ENCODE measurements at regions of chr7 and their contacts with region 1.

Region 1: DNA sequence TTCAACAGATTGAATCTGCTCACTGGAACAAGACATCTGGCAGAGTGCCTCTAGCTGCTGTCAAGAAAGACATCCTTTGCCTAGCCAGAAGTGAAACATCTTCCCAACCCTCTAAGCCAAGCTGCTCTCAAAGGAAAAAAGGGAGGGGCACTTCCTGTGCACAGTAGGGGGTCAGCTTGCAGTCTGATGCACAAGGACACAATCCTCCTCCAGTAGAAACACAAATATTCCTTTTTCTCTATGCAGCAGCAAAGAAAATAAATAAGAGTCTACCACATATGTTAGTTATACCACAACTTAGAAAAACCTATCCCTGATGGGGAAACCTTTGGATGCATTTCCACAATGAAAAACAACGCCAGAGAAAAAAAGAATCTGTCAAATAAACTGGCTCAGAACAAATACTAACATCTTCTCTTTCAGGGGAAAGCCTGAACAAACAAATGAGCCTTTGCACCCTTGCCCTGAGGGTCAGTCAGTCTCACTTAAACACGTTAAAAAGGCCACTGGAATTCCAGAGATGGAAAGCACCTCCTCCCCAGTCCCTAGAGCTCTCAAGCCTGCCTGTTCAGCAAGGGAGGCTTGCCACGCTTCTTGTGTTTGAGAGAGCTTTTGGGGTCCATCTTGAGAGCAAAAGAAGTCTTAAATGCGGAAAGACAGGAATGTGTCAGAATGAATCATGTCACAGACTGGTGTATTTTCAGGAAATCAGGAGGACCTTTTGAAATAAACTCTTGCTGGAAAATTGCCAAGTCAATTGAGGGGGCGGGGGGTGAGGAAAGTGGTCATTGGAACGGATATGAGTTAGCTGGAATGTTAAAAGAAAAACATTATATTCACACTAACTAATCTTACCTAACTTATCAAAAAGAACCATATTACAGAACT is 7.5 kb downstream of the LAMB1 start:
- DNase-seq: peak; percentile 67 to 88
- H3K4me3 ChIP-seq: peak overlapping the region; percentile 12; the same call in 1 of the 2 replicates
- H3K27ac ChIP-seq: peak overlapping the region; percentile 75
- H3K4me1 ChIP-seq: peaks cover 69% of the 10 kb centered on the region
- H3K27me3 ChIP-seq: no peaks in the 10 kb centered on the region
- CTCF ChIP-seq: no peak

Region 2: DNA sequence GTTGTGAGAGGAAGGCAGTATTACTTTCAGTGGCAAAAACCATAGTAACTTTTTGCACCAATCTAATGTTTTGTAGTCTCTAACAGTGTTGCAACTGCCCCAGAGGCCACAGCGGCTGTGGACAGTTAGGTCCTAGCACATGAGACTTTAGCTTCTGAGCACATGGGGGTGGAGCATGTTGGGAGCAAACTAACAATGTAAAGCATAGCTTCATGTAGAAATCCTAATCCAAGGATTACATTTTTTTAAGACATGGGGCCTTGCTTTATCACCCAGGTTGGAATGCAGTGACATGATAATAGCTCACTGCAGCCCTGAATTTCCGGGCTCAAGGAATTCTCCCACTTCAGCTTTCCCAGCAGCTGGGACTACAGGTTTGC is 41.5 kb before region 1 on chr7:
- CTCF ChIA-PET with region 1: interaction called, 5 read pairs
- POLR2A ChIA-PET with region 1: no interaction called
- intact Hi-C with region 1: loop called (anchors 1 kb)
- DNase-seq: no peak
- H3K4me3 ChIP-seq: no peak overlapping the region
- H3K27ac ChIP-seq: peak overlapping the region; percentile 86
- H3K4me1 ChIP-seq: peaks cover 69% of the 10 kb centered on the region
- H3K27me3 ChIP-seq: no peaks in the 10 kb centered on the region
- CTCF ChIP-seq: no peak

Region 3: DNA sequence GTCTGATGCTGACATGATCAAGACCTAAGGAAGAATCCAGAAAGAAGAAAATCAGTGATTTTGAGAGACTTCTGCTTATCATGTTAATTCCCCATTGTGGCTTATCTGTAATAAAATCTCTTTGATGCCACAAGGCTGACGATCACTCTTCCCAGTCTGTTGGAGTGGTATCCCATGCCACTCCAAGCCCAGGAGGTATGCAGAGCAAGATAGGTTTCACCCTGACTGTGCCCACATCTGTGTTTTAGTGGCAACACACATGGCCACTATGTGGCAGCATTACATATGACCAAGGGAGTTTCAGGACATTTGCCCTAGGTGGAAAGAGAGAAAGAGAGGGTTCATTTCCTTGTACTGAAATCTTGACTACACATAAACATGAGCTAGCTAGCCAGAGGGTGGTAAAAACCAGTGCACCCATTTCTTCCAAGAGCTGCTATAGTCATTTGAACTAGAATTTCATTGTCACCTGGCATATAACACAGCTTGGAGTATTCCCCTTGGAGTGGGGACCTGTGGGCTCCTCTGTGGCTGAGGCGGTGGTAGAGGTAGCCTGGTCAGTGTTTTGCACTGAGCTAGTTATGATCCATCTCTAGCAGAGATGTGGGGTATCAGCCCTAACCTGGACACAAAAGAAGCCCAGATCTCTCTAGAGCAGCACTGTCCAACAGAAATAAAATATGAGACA is 113.9 kb after region 1 on chr7:
- CTCF ChIA-PET with region 1: interaction called, 3 read pairs
- POLR2A ChIA-PET with region 1: no interaction called
- intact Hi-C with region 1: loop called (anchors 5 kb)
- DNase-seq: no peak
- H3K4me3 ChIP-seq: no peak overlapping the region
- H3K27ac ChIP-seq: no peak overlapping the region
- H3K4me1 ChIP-seq: no peaks in the 10 kb centered on the region
- H3K27me3 ChIP-seq: no peaks in the 10 kb centered on the region
- CTCF ChIP-seq: no peak; the same call in 1 of the 2 replicates

Region 4: DNA sequence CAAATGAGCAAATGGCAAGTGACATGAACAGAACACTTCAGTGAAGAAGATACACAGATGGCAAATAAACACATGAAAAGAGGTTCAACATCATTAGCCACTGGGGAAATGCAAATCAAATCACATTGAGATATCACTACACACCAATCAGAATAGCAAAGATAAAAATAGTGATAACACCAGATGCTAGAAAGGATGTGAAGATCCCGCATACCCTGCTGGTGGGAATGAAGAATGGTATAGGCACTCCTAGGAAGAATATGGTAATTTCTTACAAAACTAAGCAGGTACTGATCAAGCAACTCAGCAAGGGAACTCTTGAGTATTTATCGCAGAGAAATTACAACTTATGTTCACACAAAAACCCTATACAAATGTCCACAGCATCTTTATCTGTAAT is 123.5 kb after region 1 on chr7:
- CTCF ChIA-PET with region 1: interaction called, 3 read pairs
- POLR2A ChIA-PET with region 1: interaction called, 51 read pairs
- intact Hi-C with region 1: no loop called
- DNase-seq: no peak
- H3K4me3 ChIP-seq: no peak overlapping the region
- H3K27ac ChIP-seq: no peak overlapping the region
- H3K4me1 ChIP-seq: no peaks in the 10 kb centered on the region
- H3K27me3 ChIP-seq: no peaks in the 10 kb centered on the region
- CTCF ChIP-seq: no peak

Region 5: DNA sequence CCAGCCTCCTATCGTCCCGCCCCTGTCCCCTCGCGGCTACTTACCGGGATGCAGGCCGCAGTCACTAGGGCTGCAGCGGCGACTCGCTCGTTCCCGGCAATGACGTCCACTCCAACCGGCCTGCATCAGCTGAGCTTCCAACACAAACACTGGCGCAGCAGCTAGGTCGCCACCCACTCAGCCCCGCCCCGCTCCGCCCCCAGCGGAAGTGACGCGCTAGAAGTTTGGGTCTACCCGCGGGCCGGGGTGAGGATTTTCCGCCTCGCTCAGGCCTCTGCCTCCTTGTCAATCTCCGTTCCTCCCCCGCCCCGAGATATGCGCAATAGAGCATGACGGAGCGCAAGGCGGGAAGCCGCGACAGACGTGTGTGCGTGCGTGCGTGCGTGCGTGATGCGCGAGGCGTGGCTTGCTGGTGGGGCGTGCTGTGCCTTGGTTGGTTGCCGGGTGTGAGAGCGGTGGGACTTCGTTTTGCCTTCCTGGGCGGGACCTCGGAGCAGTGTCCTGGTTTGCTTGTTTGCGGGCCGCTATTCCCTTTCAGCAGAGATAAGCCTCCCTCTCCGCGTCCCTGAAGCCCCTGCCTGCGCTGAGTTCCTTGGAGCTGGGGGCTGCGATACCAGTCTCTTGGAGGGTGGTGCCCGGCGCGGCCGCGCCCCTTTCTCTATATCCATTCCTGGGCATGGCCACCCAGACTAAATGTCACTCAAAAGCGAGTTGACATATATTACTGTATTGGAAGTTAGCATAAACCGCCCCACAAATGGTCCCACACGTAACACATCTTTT is 530.7 kb after region 1 on chr7 and contains the start of gene PNPLA8:
- CTCF ChIA-PET with region 1: no interaction called
- POLR2A ChIA-PET with region 1: no interaction called
- intact Hi-C with region 1: loop called (anchors 2 kb)
- DNase-seq: peak; percentile 98 to 100
- H3K4me3 ChIP-seq: peak within 1 kb of the TSS; percentile 68
- H3K27ac ChIP-seq: peak within 1 kb of the TSS; percentile 96
- H3K4me1 ChIP-seq: peaks cover 56% of the 10 kb centered on the region
- H3K27me3 ChIP-seq: no peaks in the 10 kb centered on the region
- CTCF ChIP-seq: no peak
- total RNA-seq, gene PNPLA8: 15.6 and 31.3 TPM in 2 replicates